CD14-positive monocyte (primary cell): ENCODE measurements at regions of chr1 and their contacts with region 1.

Region 1: GRCh38 chr1:156659994-156660751 is 17.0 kb downstream of the NES start:
- DNase-seq: peak; percentile 91 to 98 (median 95)
- H3K4me3 ChIP-seq: no peak overlapping the region
- H3K4me3 Mint-ChIP-seq: peak overlapping the region; percentile 51 to 74
- H3K27ac ChIP-seq: no peak overlapping the region
- H3K27ac Mint-ChIP-seq: peak overlapping the region; percentile 74 to 85 (median 82)
- H3K4me1 ChIP-seq: peaks cover 73 to 80% of the 10 kb centered on the region in 2 donors
- H3K4me1 Mint-ChIP-seq: peaks cover 74% of the 10 kb centered on the region
- H3K27me3 ChIP-seq: peaks cover 22 to 40% of the 10 kb centered on the region in 2 donors
- H3K27me3 Mint-ChIP-seq: peaks cover 42 to 59% (median 45%) of the 10 kb centered on the region in 3 donors
- CTCF ChIP-seq: peak; percentile 99

Region 2: DNA sequence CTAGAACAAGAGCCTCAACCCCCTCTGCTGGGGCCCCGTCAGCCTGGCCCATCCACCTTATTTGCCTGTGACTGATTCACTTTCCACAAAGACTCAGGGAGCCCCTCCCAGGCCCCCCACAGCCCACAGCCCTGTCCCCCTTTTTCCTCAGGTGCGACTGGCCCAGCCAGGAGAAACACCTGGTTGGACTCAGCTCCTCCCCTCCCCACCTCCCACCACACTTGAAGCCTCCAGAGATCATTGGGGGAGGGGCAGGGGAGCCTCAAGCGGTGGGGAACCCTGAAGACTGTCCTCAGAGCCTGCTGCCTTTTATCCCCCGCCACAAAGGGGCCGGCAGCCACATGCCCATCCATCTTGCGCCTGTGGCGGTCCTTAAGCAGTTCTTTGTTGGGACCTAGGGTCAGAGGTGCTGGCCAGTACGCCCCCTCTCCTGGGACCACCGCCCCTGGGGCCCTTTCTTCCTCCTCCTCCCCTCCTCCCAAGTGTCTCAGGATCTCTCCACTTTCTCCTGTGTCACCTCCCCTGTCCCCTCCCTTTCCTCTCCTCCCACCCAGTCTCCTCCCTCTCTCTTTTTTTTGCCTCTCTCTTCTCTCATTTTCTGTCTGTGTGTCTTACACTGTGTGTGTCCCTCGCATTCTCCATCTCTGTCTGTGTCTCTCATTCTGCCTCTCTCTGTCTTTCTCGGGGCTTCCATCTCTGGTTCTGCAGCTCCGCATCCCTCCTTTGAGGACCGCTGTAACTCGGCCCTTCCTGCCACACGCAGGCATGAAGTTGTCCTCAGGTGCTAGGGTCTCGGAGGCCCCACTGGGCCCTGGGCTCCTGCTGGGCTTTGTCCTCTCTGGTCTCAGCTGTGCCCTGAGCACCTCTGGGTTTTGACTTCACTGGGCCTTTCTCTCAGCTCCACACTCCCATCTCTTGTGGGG is 33.0 kb after region 1 on chr1:
- intact Hi-C with region 1: no loop called
- DNase-seq: no peak
- H3K4me3 ChIP-seq: no peak overlapping the region
- H3K4me3 Mint-ChIP-seq: peak overlapping the region in 1 of 2 donors; percentile 76
- H3K27ac ChIP-seq: no peak overlapping the region
- H3K27ac Mint-ChIP-seq: no peak overlapping the region
- H3K4me1 ChIP-seq: peaks cover 2 to 10% of the 10 kb centered on the region in 2 donors
- H3K4me1 Mint-ChIP-seq: peaks cover 24% of the 10 kb centered on the region
- H3K27me3 ChIP-seq: peaks cover 33 to 66% of the 10 kb centered on the region in 2 donors
- H3K27me3 Mint-ChIP-seq: peaks cover 66 to 76% (median 76%) of the 10 kb centered on the region in 3 donors
- CTCF ChIP-seq: no peak

Region 3: DNA sequence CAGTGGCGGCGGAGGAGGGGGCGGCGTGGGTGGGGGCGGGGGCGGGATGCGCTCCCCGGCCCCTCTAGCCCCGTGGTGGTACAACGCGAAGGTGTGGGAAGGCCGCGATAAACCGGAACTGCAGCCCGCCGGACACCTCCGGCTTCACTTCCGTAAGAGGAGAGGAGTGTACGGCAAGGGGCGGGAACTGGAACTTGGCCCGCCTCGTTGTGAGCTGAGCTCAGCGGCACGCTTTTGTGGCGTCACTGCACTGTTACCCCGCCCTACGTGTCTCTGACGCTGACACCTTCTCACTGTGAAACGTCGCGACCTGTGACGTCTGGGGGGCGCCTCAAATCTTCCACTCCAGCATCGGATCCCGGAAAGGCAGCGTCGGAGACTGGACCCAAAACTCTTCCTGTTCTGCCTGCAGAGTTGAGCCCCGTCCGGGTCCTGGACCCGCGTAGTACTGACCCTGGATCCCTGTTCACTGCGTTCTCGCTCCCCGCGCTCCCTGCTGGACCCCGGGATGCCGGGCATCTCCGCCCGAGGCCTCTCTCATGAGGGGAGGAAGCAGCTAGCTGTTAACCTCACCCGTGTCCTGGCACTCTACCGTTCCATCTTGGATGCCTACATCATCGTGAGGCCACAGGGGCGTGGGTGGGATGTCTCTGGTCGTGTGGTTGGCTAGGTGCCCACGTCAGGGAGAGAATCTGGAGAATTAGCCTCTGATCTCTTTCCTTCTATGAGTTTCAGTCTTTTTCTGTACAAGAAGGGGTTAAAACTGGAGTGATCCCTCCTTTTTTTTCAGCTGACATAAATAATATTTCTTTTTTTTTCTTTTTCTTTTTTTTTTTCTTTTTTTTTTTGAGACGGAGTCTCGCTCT is 68.7 kb after region 1 on chr1 and contains the start of gene ISG20L2:
- intact Hi-C with region 1: loop called in 1 of 2 experiments (anchors 5 kb)
- DNase-seq: peak; percentile 99 to 100 (median 100)
- H3K4me3 ChIP-seq: peak within 1 kb of the TSS; percentile 64 to 94 (median 89)
- H3K4me3 Mint-ChIP-seq: peak within 1 kb of the TSS; percentile 93 to 97
- H3K27ac ChIP-seq: peak within 1 kb of the TSS; percentile 69 to 98
- H3K27ac Mint-ChIP-seq: peak within 1 kb of the TSS in 5 of 7 donors; percentile 72 to 98 (median 98)
- H3K4me1 ChIP-seq: peaks cover 38 to 45% of the 10 kb centered on the region in 2 donors
- H3K4me1 Mint-ChIP-seq: peaks cover 18% of the 10 kb centered on the region
- H3K27me3 ChIP-seq: no peaks in the 10 kb centered on the region
- H3K27me3 Mint-ChIP-seq: no peaks in the 10 kb centered on the region
- CTCF ChIP-seq: no peak
- polyA plus RNA-seq, gene ISG20L2: 17.2 to 23.5 (median 18.1) TPM